Caco-2 (cell line): ENCODE measurements at regions of chr13 and their contacts with region 1.

Region 1: DNA sequence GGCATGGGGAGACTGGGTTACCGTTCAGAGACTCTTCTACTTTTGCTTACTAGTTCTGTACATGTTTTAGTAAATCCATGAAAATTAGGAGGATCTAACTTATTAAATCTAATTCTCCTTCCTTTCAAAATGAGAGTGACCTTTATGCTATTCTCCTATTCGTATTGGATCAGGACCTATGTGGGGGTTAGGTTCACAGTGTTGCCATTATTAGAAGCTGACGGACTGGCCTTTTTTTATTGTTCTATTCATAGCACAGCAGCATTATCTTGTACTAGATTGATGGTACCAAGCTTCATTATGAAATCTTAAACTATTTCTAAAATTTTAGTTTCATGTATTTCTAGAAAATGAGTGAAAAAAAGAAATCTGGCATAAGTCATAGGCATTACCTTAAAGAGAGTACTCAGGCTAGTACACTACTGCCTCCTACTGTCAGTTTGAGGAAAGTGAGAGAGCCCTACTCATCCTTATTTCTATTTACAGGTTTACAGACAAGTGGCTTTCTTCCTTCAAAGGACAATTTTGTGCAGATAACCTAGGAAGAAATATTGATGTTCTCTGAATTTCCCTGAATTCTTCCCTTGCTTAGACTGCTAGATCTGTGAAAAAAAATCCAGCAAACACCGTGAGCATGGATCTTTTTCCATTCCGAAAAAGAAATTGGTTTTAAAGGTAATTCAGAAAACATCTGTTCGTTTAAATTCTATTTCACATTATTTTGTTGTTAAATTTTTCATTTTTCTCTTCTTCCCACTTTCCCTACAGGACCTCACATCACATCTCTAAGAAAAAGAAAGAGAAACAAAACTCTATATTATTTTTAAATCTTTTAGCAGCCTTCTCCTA is 485.5 kb downstream of the DIAPH3 start:
- DNase-seq: peak in 1 of 2 experiments; percentile 51
- H3K4me3 ChIP-seq: no peak overlapping the region
- H3K4me3 Mint-ChIP-seq: no peak overlapping the region
- H3K27ac Mint-ChIP-seq: no peak overlapping the region
- H3K4me1 ChIP-seq: peaks cover 42% of the 10 kb centered on the region
- H3K4me1 Mint-ChIP-seq: peaks cover 6% of the 10 kb centered on the region
- H3K27me3 ChIP-seq: no peaks in the 10 kb centered on the region
- H3K27me3 Mint-ChIP-seq: no peaks in the 10 kb centered on the region
- CTCF ChIP-seq: peak; percentile 79 to 85

Region 2: GRCh38 chr13:59391696-59392095 is 286.5 kb before region 1 on chr13:
- CTCF ChIA-PET with region 1: interaction called, 6 read pairs
- POLR2A ChIA-PET with region 1: no interaction called
- intact Hi-C with region 1: loop called (anchors 1 kb)
- DNase-seq: peak; percentile 57 to 76
- H3K4me3 ChIP-seq: no peak overlapping the region
- H3K4me3 Mint-ChIP-seq: no peak overlapping the region
- H3K27ac Mint-ChIP-seq: no peak overlapping the region
- H3K4me1 ChIP-seq: no peaks in the 10 kb centered on the region
- H3K4me1 Mint-ChIP-seq: peaks cover 6% of the 10 kb centered on the region
- H3K27me3 ChIP-seq: no peaks in the 10 kb centered on the region
- H3K27me3 Mint-ChIP-seq: no peaks in the 10 kb centered on the region
- CTCF ChIP-seq: peak; percentile 86 to 89

Region 3: GRCh38 chr13:59607780-59608233 is 70.4 kb before region 1 on chr13:
- CTCF ChIA-PET with region 1: no interaction called
- POLR2A ChIA-PET with region 1: no interaction called
- intact Hi-C with region 1: loop called (anchors 5 kb)
- DNase-seq: peak; percentile 57 to 69
- H3K4me3 ChIP-seq: no peak overlapping the region
- H3K4me3 Mint-ChIP-seq: peak overlapping the region; percentile 55
- H3K27ac Mint-ChIP-seq: peak overlapping the region; percentile 81
- H3K4me1 ChIP-seq: peaks cover 26% of the 10 kb centered on the region
- H3K4me1 Mint-ChIP-seq: peaks cover 22% of the 10 kb centered on the region
- H3K27me3 ChIP-seq: no peaks in the 10 kb centered on the region
- H3K27me3 Mint-ChIP-seq: no peaks in the 10 kb centered on the region
- CTCF ChIP-seq: no peak

Region 4: DNA sequence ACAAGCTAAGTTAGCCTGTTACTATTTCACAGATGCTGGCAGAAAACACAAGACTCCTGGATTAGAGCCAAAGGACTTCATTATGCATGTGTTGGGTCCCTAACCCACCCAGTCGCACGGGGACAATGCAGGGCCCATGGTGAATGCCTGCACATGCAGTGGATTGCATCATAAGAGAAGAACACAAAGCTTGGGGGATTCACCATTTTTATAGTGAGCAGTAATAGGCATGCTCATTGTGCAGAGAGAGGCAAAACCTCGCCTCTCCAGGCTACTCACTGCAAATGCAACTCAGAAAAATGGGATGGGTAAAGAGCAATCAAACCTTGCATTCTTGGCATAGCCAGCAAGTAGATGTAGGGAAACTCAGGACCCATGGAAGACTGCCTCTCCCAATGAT is 369.7 kb after region 1 on chr13:
- CTCF ChIA-PET with region 1: no interaction called
- POLR2A ChIA-PET with region 1: no interaction called
- intact Hi-C with region 1: no loop called
- DNase-seq: peak in 1 of 2 experiments; percentile 35
- H3K4me3 ChIP-seq: no peak overlapping the region
- H3K4me3 Mint-ChIP-seq: no peak overlapping the region
- H3K27ac Mint-ChIP-seq: no peak overlapping the region
- H3K4me1 ChIP-seq: no peaks in the 10 kb centered on the region
- H3K4me1 Mint-ChIP-seq: peaks cover 19% of the 10 kb centered on the region
- H3K27me3 ChIP-seq: no peaks in the 10 kb centered on the region
- H3K27me3 Mint-ChIP-seq: no peaks in the 10 kb centered on the region
- CTCF ChIP-seq: no peak

Region 5: GRCh38 chr13:60335531-60335930 is 657.3 kb after region 1 on chr13:
- CTCF ChIA-PET with region 1: no interaction called
- POLR2A ChIA-PET with region 1: no interaction called
- intact Hi-C with region 1: loop called (anchors 1 kb)
- DNase-seq: no peak
- H3K4me3 ChIP-seq: no peak overlapping the region
- H3K4me3 Mint-ChIP-seq: no peak overlapping the region
- H3K27ac Mint-ChIP-seq: no peak overlapping the region
- H3K4me1 ChIP-seq: no peaks in the 10 kb centered on the region
- H3K4me1 Mint-ChIP-seq: no peaks in the 10 kb centered on the region
- H3K27me3 ChIP-seq: no peaks in the 10 kb centered on the region
- H3K27me3 Mint-ChIP-seq: peaks cover 4% of the 10 kb centered on the region
- CTCF ChIP-seq: peak; percentile 58 to 73